ENCODE measurements at regions of chr16 and their contacts with region 1.

Region 1: GRCh38 chr16:1890024-1890707 is 18.2 kb upstream of the MEIOB start:
- DNase-seq: no peak
- ATAC-seq: no peak
- H3K4me3 ChIP-seq: no peak overlapping the region
- H3K27ac ChIP-seq: no peak overlapping the region
- H3K4me1 ChIP-seq: no peaks in the 10 kb centered on the region
- H3K27me3 ChIP-seq: peaks cover 11% of the 10 kb centered on the region
- CTCF ChIP-seq: no peak

Region 2: DNA sequence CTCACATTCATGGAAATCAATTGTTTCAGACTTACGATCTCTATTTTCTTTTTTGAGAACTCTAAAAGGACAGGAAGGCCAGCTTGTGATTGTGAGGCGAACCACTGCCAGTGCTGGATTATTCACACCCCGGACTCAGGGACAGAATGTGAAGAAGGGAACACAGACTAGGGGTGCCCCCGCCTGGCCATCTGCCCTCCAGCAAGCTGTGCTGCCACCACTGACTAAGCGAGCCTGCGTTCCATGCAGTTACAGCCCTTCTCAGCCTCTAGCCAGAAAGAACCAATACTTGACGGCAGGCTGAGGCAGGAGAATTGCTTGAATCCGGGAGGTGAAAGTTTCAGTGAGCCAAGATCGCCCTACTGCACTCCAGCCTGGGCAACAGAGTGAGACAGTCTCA is 66.3 kb before region 1 on chr16:
- CTCF ChIA-PET with region 1: interaction called, 19 read pairs
- POLR2A ChIA-PET with region 1: no interaction called
- intact Hi-C with region 1: no loop called
- DNase-seq: peak; percentile 6
- ATAC-seq: no peak
- H3K4me3 ChIP-seq: no peak overlapping the region
- H3K27ac ChIP-seq: no peak overlapping the region
- H3K4me1 ChIP-seq: peaks cover 5% of the 10 kb centered on the region
- H3K27me3 ChIP-seq: no peaks in the 10 kb centered on the region
- CTCF ChIP-seq: peak; percentile 26; the same call in 1 of the 2 replicates